ENCODE measurements at regions of chr17 and their contacts with region 1.

Region 1: GRCh38 chr17:45261577-45262515 is at the start of gene SPATA32:
- DNase-seq: no peak
- ATAC-seq: peak; percentile 87
- H3K4me3 ChIP-seq: peak within 1 kb of the TSS; percentile 75
- H3K27ac ChIP-seq: peak within 1 kb of the TSS; percentile 56
- H3K4me1 ChIP-seq: peaks cover 17% of the 10 kb centered on the region
- H3K27me3 ChIP-seq: no peaks in the 10 kb centered on the region
- CTCF ChIP-seq: no peak
- EP300 ChIP-seq: no peak
- POLR2A ChIP-seq: peak; percentile 73
- RAD21 ChIP-seq: no peak
- polyA plus RNA-seq, gene SPATA32: 0.11 to 0.13 TPM

Region 2: DNA sequence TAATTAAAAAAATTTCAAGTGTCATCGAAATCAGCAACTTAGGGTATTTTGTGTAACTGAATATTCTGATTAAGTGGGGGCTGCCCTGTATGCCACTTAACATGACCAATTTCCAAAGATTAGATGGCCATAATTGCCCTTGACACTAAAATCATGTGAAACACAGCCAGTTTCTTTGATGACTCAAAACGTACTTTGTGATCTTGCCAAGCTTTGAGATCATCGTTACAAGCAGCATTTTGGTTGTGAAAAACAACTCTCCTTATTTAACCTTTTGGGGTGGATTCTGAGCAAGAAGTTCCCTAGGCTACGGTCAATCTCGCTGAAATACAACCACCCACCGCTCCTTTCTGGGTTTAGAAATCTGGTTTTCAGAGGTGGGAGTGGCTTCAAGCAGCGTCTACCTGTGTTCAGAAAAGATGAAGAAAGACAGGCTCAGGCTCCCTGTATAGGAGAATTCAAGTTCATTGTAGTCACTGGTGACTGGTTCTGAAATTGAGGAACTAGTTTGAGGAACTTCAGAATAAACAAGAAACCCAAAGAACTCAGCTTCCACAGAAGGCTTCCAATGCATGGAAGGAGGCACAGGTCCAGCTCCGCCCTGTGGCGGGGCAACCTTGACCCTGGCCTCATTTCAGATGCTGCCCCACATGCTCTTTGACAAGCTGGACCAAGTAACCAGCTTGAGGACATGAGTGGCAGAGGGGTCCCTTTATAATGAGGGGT is 45.6 kb after region 1 on chr17:
- CTCF ChIA-PET with region 1: no interaction called
- POLR2A ChIA-PET with region 1: no interaction called
- RAD21 ChIA-PET with region 1: no interaction called
- SMC1A ChIA-PET with region 1: no interaction called
- in situ Hi-C with region 1: no loop called
- intact Hi-C with region 1: no loop called
- DNase-seq: peak; percentile 90
- ATAC-seq: peak; percentile 64
- H3K4me3 ChIP-seq: peak overlapping the region; percentile 14; the same call in 1 of the 2 replicates
- H3K27ac ChIP-seq: peak overlapping the region; percentile 94
- H3K4me1 ChIP-seq: peaks cover 82% of the 10 kb centered on the region
- H3K27me3 ChIP-seq: no peaks in the 10 kb centered on the region
- CTCF ChIP-seq: 0 out of 6 replicates have a peak, but pooled peaks of 1 of the 3 experiments have one; percentile 5
- EP300 ChIP-seq: peak; percentile 75 to 78; a peak in 3 of 4 replicates
- POLR2A ChIP-seq: no peak
- RAD21 ChIP-seq: no peak

Region 3: DNA sequence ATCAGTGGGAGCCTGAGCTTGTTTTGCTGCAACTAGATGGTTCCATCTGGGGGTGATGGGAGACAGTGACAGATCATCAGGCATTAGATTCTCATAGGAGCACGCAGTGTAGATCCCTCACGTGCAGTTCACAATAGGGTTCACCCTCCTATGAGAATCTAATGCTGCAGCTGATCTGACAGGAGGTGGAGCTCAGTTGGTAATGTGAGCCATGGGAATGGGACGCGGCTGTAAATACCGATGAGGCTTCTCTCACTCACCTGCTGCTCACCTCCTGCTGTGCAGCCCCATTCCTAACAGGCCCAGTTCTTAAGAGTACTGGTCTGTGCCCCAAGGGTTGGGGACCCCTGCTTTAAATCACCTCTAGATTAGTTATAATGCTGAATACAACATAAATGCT is 366.2 kb after region 1 on chr17:
- CTCF ChIA-PET with region 1: no interaction called
- POLR2A ChIA-PET with region 1: no interaction called
- RAD21 ChIA-PET with region 1: no interaction called
- SMC1A ChIA-PET with region 1: no interaction called
- in situ Hi-C with region 1: loop called (anchors 25 kb)
- intact Hi-C with region 1: no loop called
- DNase-seq: no peak
- ATAC-seq: no peak
- H3K4me3 ChIP-seq: no peak overlapping the region
- H3K27ac ChIP-seq: no peak overlapping the region
- H3K4me1 ChIP-seq: no peaks in the 10 kb centered on the region
- H3K27me3 ChIP-seq: no peaks in the 10 kb centered on the region
- CTCF ChIP-seq: no peak
- EP300 ChIP-seq: no peak
- POLR2A ChIP-seq: no peak
- RAD21 ChIP-seq: no peak

Region 4: GRCh38 chr17:45677770-45678169 is 415.9 kb after region 1 on chr17:
- CTCF ChIA-PET with region 1: no interaction called
- POLR2A ChIA-PET with region 1: no interaction called
- RAD21 ChIA-PET with region 1: no interaction called
- SMC1A ChIA-PET with region 1: no interaction called
- in situ Hi-C with region 1: no loop called
- intact Hi-C with region 1: no loop called
- DNase-seq: no peak
- ATAC-seq: no peak
- H3K4me3 ChIP-seq: no peak overlapping the region
- H3K27ac ChIP-seq: no peak overlapping the region
- H3K4me1 ChIP-seq: no peaks in the 10 kb centered on the region
- H3K27me3 ChIP-seq: peaks cover 0 to 1% of the 10 kb centered on the region in 2 experiments; a peak in 1 of 4 replicates
- CTCF ChIP-seq: no peak
- EP300 ChIP-seq: no peak
- POLR2A ChIP-seq: no peak
- RAD21 ChIP-seq: no peak

Measured in GM12878 (cell line).